Activated B cell treated with CpG ODN at 0.5 μM for 24 hours (primary cell): ENCODE measurements at regions of chr6 and their contacts with region 1.

Region 1: GRCh38 chr6:132279592-132280139 is 121.6 kb downstream of the MOXD1 start:
- DNase-seq: peak; percentile 65
- ATAC-seq: peak; percentile 93
- H3K4me3 Mint-ChIP-seq: peak overlapping the region; percentile 86
- H3K27ac Mint-ChIP-seq: peak overlapping the region; percentile 19
- H3K4me1 Mint-ChIP-seq: no peaks in the 10 kb centered on the region
- H3K27me3 Mint-ChIP-seq: peaks cover 7% of the 10 kb centered on the region
- CTCF ChIP-seq: peak; percentile 100

Region 2: DNA sequence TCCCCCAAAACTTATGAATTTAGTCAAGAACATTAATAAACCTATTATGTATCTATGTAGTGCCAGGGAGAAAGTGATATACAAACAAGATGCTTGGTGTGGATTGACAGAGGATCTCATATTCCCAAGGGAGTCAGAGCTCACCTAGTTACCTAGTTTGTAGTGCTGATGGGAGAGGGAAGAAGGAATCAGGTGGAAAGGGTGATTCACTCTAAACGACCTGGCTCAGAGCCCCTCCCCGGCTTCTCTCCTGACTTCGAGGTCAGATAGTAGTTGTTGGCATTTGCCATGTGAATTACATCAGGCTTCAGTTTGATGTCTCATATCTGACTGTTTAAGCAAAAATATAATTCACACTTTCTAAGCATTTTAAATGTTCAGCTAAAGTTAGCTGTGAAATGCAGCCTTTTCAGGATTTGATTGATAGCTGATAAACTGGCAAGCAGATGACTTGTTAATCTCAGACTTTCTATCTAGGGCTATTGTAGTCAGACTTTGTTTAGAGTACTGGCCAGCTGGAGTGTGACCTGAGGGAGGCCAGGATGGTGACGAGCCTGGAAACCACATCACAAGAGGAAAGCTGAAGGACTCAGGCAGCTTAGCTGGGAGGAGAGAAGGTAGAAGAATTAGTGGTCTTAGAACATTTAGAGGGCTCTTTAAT is 1020.7 kb before region 1 on chr6:
- CTCF ChIA-PET with region 1: no interaction called
- POLR2A ChIA-PET with region 1: no interaction called
- intact Hi-C with region 1: no loop called
- DNase-seq: no peak
- ATAC-seq: no peak
- H3K4me3 Mint-ChIP-seq: no peak overlapping the region
- H3K27ac Mint-ChIP-seq: no peak overlapping the region
- H3K4me1 Mint-ChIP-seq: no peaks in the 10 kb centered on the region
- H3K27me3 Mint-ChIP-seq: no peaks in the 10 kb centered on the region
- CTCF ChIP-seq: no peak

Region 3: GRCh38 chr6:132261354-132261753 is 18.3 kb before region 1 on chr6:
- CTCF ChIA-PET with region 1: interaction called, 67 read pairs
- POLR2A ChIA-PET with region 1: no interaction called
- intact Hi-C with region 1: no loop called
- DNase-seq: no peak
- ATAC-seq: no peak
- H3K4me3 Mint-ChIP-seq: no peak overlapping the region
- H3K27ac Mint-ChIP-seq: no peak overlapping the region
- H3K4me1 Mint-ChIP-seq: no peaks in the 10 kb centered on the region
- H3K27me3 Mint-ChIP-seq: peaks cover 2% of the 10 kb centered on the region
- CTCF ChIP-seq: no peak

Region 4: DNA sequence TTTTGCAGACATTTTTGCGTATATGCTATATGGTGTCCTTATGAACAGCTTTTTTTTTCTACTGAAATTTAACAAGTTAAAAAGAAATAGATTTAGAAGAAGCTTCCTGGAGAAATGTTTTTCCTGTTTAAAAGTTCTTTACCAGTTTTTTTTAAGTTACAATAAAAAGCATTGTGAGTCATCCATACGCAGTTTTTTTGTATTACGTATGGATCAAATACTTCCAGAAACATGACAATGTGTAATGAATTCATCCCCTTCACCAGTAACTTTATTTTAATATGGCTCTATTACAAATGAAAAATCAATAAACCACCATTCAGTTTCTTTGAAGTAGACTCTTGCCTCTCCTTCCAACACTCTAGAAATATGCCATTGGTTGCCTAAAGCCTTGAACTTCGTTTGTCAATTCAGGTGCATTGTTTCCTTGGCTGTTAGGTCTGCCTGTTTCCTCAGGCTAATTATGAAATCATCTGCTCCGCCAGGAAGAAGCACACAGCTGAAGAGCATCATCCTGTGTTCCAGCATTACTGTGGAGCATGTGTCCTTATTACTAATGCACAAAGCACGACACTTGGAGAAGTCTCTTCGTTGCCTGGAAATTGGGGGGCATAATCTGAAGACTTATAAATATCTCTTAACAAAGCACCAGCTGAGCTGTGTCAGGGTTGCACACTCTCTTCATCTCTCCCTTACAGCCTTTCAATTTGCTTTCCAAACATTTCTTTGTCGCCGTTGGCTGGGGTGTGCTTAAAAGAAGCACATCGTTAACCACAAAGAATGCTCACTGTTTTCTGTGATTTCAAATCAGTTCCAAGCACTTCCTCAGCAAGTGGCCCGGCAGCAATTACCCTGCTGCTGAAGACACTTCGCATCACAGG is 112.0 kb after region 1 on chr6:
- CTCF ChIA-PET with region 1: interaction called, 85 read pairs
- POLR2A ChIA-PET with region 1: no interaction called
- intact Hi-C with region 1: loop called (anchors 1 kb)
- DNase-seq: no peak
- ATAC-seq: no peak
- H3K4me3 Mint-ChIP-seq: no peak overlapping the region
- H3K27ac Mint-ChIP-seq: no peak overlapping the region
- H3K4me1 Mint-ChIP-seq: peaks cover 29% of the 10 kb centered on the region
- H3K27me3 Mint-ChIP-seq: peaks cover 4% of the 10 kb centered on the region
- CTCF ChIP-seq: no peak

Region 5: DNA sequence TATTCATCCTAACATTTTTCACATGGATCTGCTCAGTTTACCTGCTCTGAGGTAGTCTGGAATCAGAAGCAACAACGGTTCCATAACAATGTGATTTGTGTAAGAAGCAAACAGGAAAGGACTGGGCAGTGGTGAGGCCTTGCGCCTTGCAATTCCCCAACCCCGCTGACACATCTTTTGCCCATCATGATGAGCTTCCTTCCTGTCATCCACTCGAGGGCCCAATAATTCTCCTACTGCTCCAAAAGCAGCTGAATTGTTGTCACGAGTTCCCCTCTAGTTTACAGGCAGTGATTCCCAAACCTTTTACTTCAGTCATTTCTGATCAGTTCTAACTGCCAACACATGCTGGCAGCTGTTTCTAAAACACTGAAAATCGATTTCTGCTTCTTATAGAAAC is 210.4 kb after region 1 on chr6:
- CTCF ChIA-PET with region 1: interaction called, 147 read pairs
- POLR2A ChIA-PET with region 1: no interaction called
- intact Hi-C with region 1: no loop called
- DNase-seq: no peak
- ATAC-seq: peak; percentile 37
- H3K4me3 Mint-ChIP-seq: no peak overlapping the region
- H3K27ac Mint-ChIP-seq: no peak overlapping the region
- H3K4me1 Mint-ChIP-seq: peaks cover 39% of the 10 kb centered on the region
- H3K27me3 Mint-ChIP-seq: no peaks in the 10 kb centered on the region
- CTCF ChIP-seq: no peak

Region 6: GRCh38 chr6:132768051-132768517 is 488.4 kb after region 1 on chr6:
- CTCF ChIA-PET with region 1: interaction called, 6 read pairs
- POLR2A ChIA-PET with region 1: no interaction called
- intact Hi-C with region 1: loop called (anchors 1 kb)
- DNase-seq: peak; percentile 33
- ATAC-seq: peak; percentile 79
- H3K4me3 Mint-ChIP-seq: peak overlapping the region; percentile 47
- H3K27ac Mint-ChIP-seq: no peak overlapping the region
- H3K4me1 Mint-ChIP-seq: peaks cover 18% of the 10 kb centered on the region
- H3K27me3 Mint-ChIP-seq: no peaks in the 10 kb centered on the region
- CTCF ChIP-seq: peak; percentile 30